CD8-positive, alpha-beta memory T cell (primary cell): ENCODE measurements at regions of chr14 and their contacts with region 1.

Region 1: DNA sequence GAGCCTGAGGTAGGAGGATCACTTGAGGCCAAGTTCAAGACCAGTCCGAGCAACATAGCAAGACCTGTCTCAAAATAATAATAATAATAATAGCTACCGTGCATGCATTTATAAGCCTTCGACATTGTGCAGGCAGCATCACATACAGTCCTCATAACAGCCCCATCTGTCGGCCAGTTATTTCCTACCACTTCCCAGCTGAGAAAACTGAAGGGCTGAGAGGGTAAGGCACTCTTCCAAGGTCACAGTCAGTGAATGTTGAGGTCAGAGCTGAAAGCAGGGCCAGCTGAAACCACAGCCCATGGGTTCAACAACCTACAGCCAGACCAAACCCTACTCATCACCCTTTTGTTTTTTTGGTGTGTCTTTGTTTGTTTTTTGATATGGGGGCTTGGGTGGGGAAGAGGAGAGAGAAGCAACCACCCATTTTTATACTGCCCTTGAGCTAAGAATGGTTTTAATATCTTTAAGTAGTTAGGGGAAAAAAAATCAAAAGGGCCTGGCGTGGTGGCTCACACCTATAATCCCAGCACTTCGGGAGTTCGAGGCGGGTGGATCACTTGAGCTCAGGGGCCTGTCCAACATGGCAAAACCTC is 16.8 kb upstream of the ITPK1 start:
- DNase-seq: peak in 4 of 5 donors; percentile 3 to 53 (median 22)
- H3K4me3 ChIP-seq: no peak overlapping the region
- H3K4me3 Mint-ChIP-seq: no peak overlapping the region
- H3K27ac ChIP-seq: no peak overlapping the region
- H3K27ac Mint-ChIP-seq: peak overlapping the region in 1 of 8 donors; percentile 22
- H3K4me1 ChIP-seq: no peaks in the 10 kb centered on the region
- H3K4me1 Mint-ChIP-seq: no peaks in the 10 kb centered on the region
- H3K27me3 ChIP-seq: no peaks in the 10 kb centered on the region
- H3K27me3 Mint-ChIP-seq: peaks cover 2 to 3% of the 10 kb centered on the region in 2 donors

Region 2: GRCh38 chr14:92951912-92952471 is 180.6 kb before region 1 on chr14:
- CTCF ChIA-PET with region 1: interaction called, 14 read pairs
- POLR2A ChIA-PET with region 1: no interaction called
- DNase-seq: peak; percentile 68 to 82 (median 75)
- H3K4me3 ChIP-seq: no peak overlapping the region
- H3K4me3 Mint-ChIP-seq: no peak overlapping the region
- H3K27ac ChIP-seq: no peak overlapping the region
- H3K27ac Mint-ChIP-seq: peak overlapping the region in 2 of 8 donors; percentile 22 to 69
- H3K4me1 ChIP-seq: no peaks in the 10 kb centered on the region
- H3K4me1 Mint-ChIP-seq: peaks cover 5 to 6% (median 6%) of the 10 kb centered on the region in 3 donors
- H3K27me3 ChIP-seq: no peaks in the 10 kb centered on the region
- H3K27me3 Mint-ChIP-seq: no peaks in the 10 kb centered on the region

Region 3: GRCh38 chr14:93033983-93034670 is 98.4 kb before region 1 on chr14:
- CTCF ChIA-PET with region 1: interaction called, 14 read pairs
- POLR2A ChIA-PET with region 1: no interaction called
- DNase-seq: peak; percentile 20 to 72 (median 42)
- H3K4me3 ChIP-seq: no peak overlapping the region
- H3K4me3 Mint-ChIP-seq: peak overlapping the region; percentile 55 to 74 (median 69)
- H3K27ac ChIP-seq: no peak overlapping the region
- H3K27ac Mint-ChIP-seq: peak overlapping the region; percentile 69 to 95 (median 88)
- H3K4me1 ChIP-seq: peaks cover 25% of the 10 kb centered on the region
- H3K4me1 Mint-ChIP-seq: peaks cover 39 to 54% (median 43%) of the 10 kb centered on the region in 3 donors
- H3K27me3 ChIP-seq: no peaks in the 10 kb centered on the region
- H3K27me3 Mint-ChIP-seq: no peaks in the 10 kb centered on the region

Region 4: DNA sequence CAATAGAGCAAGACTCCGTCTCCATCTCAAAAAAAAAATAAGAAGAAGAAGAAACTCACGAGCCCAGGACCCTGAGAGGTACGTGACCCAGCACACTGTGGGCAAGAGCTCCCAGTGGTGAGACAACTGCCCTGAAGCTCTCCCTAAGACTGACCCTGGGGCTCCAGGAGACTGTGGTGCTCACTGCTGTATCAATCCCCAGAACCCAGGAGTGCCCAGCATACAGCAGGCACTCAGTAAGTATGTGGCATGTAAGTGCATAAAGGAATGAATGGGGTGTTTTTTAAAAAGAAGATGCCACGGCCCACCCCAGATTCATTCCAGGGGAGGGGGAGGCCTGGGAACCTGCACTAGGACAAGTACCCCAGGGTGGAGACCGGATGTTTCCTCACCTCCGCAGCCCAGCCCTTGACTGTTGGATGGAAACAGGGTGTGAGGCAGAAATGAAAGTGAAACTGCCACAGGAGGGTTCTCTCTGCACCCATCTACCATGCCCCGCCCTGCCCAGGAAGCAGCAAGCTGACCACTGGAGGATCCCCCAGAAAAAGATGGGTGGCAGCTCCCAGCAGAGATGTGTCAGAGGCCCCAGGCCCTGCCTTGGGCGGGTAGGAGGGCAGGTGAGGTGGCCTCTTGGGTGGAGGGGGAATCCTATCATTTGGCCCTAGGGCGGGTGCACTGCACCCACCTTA is 29.0 kb before region 1 on chr14:
- CTCF ChIA-PET with region 1: interaction called, 15 read pairs
- POLR2A ChIA-PET with region 1: no interaction called
- DNase-seq: peak; percentile 44 to 82 (median 64)
- H3K4me3 ChIP-seq: peak overlapping the region; percentile 69
- H3K4me3 Mint-ChIP-seq: peak overlapping the region; percentile 55 to 92 (median 87)
- H3K27ac ChIP-seq: peak overlapping the region; percentile 74
- H3K27ac Mint-ChIP-seq: peak overlapping the region; percentile 57 to 99 (median 94)
- H3K4me1 ChIP-seq: peaks cover 17% of the 10 kb centered on the region
- H3K4me1 Mint-ChIP-seq: peaks cover 38 to 56% (median 39%) of the 10 kb centered on the region in 3 donors
- H3K27me3 ChIP-seq: no peaks in the 10 kb centered on the region
- H3K27me3 Mint-ChIP-seq: no peaks in the 10 kb centered on the region

Region 5: GRCh38 chr14:93120517-93120916 is 12.1 kb before region 1 on chr14:
- CTCF ChIA-PET with region 1: interaction called, 81 read pairs
- POLR2A ChIA-PET with region 1: no interaction called
- DNase-seq: no peak
- H3K4me3 ChIP-seq: no peak overlapping the region
- H3K4me3 Mint-ChIP-seq: peak overlapping the region in 1 of 7 donors; percentile 19
- H3K27ac ChIP-seq: no peak overlapping the region
- H3K27ac Mint-ChIP-seq: no peak overlapping the region
- H3K4me1 ChIP-seq: peaks cover 10% of the 10 kb centered on the region
- H3K4me1 Mint-ChIP-seq: peaks cover 1 to 10% (median 7%) of the 10 kb centered on the region in 3 donors
- H3K27me3 ChIP-seq: no peaks in the 10 kb centered on the region
- H3K27me3 Mint-ChIP-seq: peaks cover 0 to 3% of the 10 kb centered on the region in 2 donors

Region 6: GRCh38 chr14:93184388-93185353 is 52.1 kb after region 1 on chr14 and contains the starts of genes LYSET and MOAP1:
- CTCF ChIA-PET with region 1: no interaction called
- POLR2A ChIA-PET with region 1: no interaction called
- DNase-seq: peak; percentile 89 to 95 (median 90)
- H3K4me3 ChIP-seq: peak within 1 kb of the TSS; percentile 95
- H3K4me3 Mint-ChIP-seq: peak within 1 kb of the TSS; percentile 91 to 97 (median 94)
- H3K27ac ChIP-seq: peak within 1 kb of the TSS; percentile 98
- H3K27ac Mint-ChIP-seq: peak within 1 kb of the TSS; percentile 93 to 99 (median 98)
- H3K4me1 ChIP-seq: peaks cover 31% of the 10 kb centered on the region
- H3K4me1 Mint-ChIP-seq: peaks cover 33 to 47% (median 45%) of the 10 kb centered on the region in 3 donors
- H3K27me3 ChIP-seq: no peaks in the 10 kb centered on the region
- H3K27me3 Mint-ChIP-seq: no peaks in the 10 kb centered on the region
- total RNA-seq, gene LYSET: 19.3 to 20.5 TPM
- total RNA-seq, gene MOAP1: 16.7 to 17.4 TPM